Natural killer cell (primary cell): ENCODE measurements at regions of chr11 and their contacts with region 1.

Region 1: GRCh38 chr11:125514336-125515101 is 18.5 kb upstream of the FEZ1 start:
- DNase-seq: peak; percentile 56 to 90
- ATAC-seq: peak; percentile 67 to 87 (median 79)
- H3K4me3 ChIP-seq: no peak overlapping the region
- H3K4me3 Mint-ChIP-seq: peak overlapping the region; percentile 61
- H3K27ac ChIP-seq: peak overlapping the region; percentile 89
- H3K27ac Mint-ChIP-seq: peak overlapping the region; percentile 90 to 99
- H3K4me1 ChIP-seq: peaks cover 50% of the 10 kb centered on the region
- H3K4me1 Mint-ChIP-seq: peaks cover 54 to 55% of the 10 kb centered on the region in 2 donors
- H3K27me3 ChIP-seq: no peaks in the 10 kb centered on the region
- H3K27me3 Mint-ChIP-seq: no peaks in the 10 kb centered on the region
- CTCF ChIP-seq: no peak

Region 2: GRCh38 chr11:125111343-125112207 is 402.9 kb before region 1 on chr11 and contains the start of gene TMEM218:
- intact Hi-C with region 1: loop called (anchors 5 kb)
- DNase-seq: peak; percentile 90 to 98
- ATAC-seq: peak; percentile 92 to 98 (median 95)
- H3K4me3 ChIP-seq: peak within 1 kb of the TSS; percentile 82
- H3K4me3 Mint-ChIP-seq: peak within 1 kb of the TSS; percentile 99
- H3K27ac ChIP-seq: peak within 1 kb of the TSS; percentile 84
- H3K27ac Mint-ChIP-seq: peak within 1 kb of the TSS; percentile 95 to 99
- H3K4me1 ChIP-seq: peaks cover 14% of the 10 kb centered on the region
- H3K4me1 Mint-ChIP-seq: peaks cover 17 to 23% of the 10 kb centered on the region in 2 donors
- H3K27me3 ChIP-seq: no peaks in the 10 kb centered on the region
- H3K27me3 Mint-ChIP-seq: peaks cover 0 to 9% of the 10 kb centered on the region in 2 donors
- CTCF ChIP-seq: no peak
- total RNA-seq, gene TMEM218: 10.0 to 14.2 (median 12.1) TPM

Region 3: DNA sequence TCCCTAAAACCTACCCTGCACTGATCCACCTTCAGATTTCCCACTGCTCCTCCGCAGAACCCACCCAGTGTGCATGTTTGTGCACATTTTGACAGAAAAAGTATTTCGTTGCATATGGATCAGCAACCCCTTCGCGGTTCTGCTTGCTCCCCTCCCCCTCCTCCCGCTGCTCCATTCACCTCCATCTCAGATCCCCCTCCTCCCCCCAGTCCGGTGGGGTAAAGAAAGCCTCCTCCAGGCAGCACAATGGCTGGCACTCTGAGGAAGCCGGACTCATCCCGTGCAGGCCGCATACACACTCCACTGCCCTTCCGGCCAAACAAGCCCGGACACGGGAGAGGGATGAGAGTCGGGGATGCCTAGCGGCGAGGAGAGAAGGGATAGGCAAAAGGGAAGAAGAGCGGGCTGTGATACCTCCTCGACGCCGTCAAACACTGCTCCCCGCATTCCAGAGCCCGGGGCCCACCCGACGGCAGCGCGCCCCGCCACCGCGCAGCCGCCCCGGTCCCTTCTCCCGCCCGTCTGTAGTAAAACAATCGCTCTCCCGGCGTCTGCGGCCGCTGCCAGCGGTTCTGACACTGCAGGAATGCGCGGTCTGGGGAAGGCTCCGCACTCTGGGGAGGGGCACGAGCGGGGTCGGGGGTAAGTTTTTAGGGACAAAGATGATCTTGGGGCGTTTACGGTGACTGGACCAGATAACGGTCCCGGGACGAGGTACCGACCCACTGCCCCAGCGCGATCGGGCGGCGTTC is 19.4 kb before region 1 on chr11:
- intact Hi-C with region 1: loop called (anchors 1 kb)
- DNase-seq: peak; percentile 22 to 43
- ATAC-seq: peak; percentile 11 to 28 (median 25)
- H3K4me3 ChIP-seq: peak overlapping the region; percentile 80
- H3K4me3 Mint-ChIP-seq: peak overlapping the region; percentile 96
- H3K27ac ChIP-seq: no peak overlapping the region
- H3K27ac Mint-ChIP-seq: peak overlapping the region; percentile 90
- H3K4me1 ChIP-seq: peaks cover 24% of the 10 kb centered on the region
- H3K4me1 Mint-ChIP-seq: peaks cover 30 to 40% of the 10 kb centered on the region in 2 donors
- H3K27me3 ChIP-seq: peaks cover 9% of the 10 kb centered on the region
- H3K27me3 Mint-ChIP-seq: peaks cover 0 to 10% of the 10 kb centered on the region in 2 donors
- CTCF ChIP-seq: no peak

Region 4: GRCh38 chr11:125568970-125569914 is 54.7 kb after region 1 on chr11 and contains the start of gene EI24:
- intact Hi-C with region 1: loop called (anchors 5 kb)
- DNase-seq: peak; percentile 77 to 94
- ATAC-seq: peak; percentile 94 to 98 (median 95)
- H3K4me3 ChIP-seq: peak within 1 kb of the TSS; percentile 82
- H3K4me3 Mint-ChIP-seq: peak within 1 kb of the TSS; percentile 89
- H3K27ac ChIP-seq: peak within 1 kb of the TSS; percentile 76
- H3K27ac Mint-ChIP-seq: peak within 1 kb of the TSS; percentile 87 to 95
- H3K4me1 ChIP-seq: peaks cover 19% of the 10 kb centered on the region
- H3K4me1 Mint-ChIP-seq: peaks cover 18 to 21% of the 10 kb centered on the region in 2 donors
- H3K27me3 ChIP-seq: no peaks in the 10 kb centered on the region
- H3K27me3 Mint-ChIP-seq: no peaks in the 10 kb centered on the region
- CTCF ChIP-seq: peak; percentile 55
- total RNA-seq, gene EI24: 19.5 to 30.0 (median 20.2) TPM

Region 5: GRCh38 chr11:125592305-125593112 is 78.0 kb after region 1 on chr11 and contains the start of gene STT3A:
- intact Hi-C with region 1: loop called (anchors 1 kb)
- DNase-seq: peak; percentile 97 to 99
- ATAC-seq: peak; percentile 91 to 98 (median 92)
- H3K4me3 ChIP-seq: peak within 1 kb of the TSS; percentile 81
- H3K4me3 Mint-ChIP-seq: peak within 1 kb of the TSS; percentile 99
- H3K27ac ChIP-seq: peak within 1 kb of the TSS; percentile 97
- H3K27ac Mint-ChIP-seq: peak within 1 kb of the TSS; percentile 99 to 100
- H3K4me1 ChIP-seq: peaks cover 20% of the 10 kb centered on the region
- H3K4me1 Mint-ChIP-seq: peaks cover 41 to 52% of the 10 kb centered on the region in 2 donors
- H3K27me3 ChIP-seq: no peaks in the 10 kb centered on the region
- H3K27me3 Mint-ChIP-seq: no peaks in the 10 kb centered on the region
- CTCF ChIP-seq: no peak
- total RNA-seq, gene STT3A: 56.7 to 63.5 (median 62.6) TPM

Region 6: GRCh38 chr11:125887373-125888324 is 373.1 kb after region 1 on chr11 and contains the start of gene HYLS1:
- intact Hi-C with region 1: loop called (anchors 5 kb)
- DNase-seq: peak; percentile 98
- ATAC-seq: peak; percentile 75 to 91 (median 85)
- H3K4me3 ChIP-seq: peak within 1 kb of the TSS; percentile 90
- H3K4me3 Mint-ChIP-seq: peak within 1 kb of the TSS; percentile 96
- H3K27ac ChIP-seq: peak within 1 kb of the TSS; percentile 95
- H3K27ac Mint-ChIP-seq: peak within 1 kb of the TSS; percentile 94 to 97
- H3K4me1 ChIP-seq: peaks cover 15% of the 10 kb centered on the region
- H3K4me1 Mint-ChIP-seq: peaks cover 17 to 22% of the 10 kb centered on the region in 2 donors
- H3K27me3 ChIP-seq: no peaks in the 10 kb centered on the region
- H3K27me3 Mint-ChIP-seq: peaks cover 0 to 4% of the 10 kb centered on the region in 2 donors
- CTCF ChIP-seq: no peak
- total RNA-seq, gene HYLS1: 4.4 to 6.8 (median 5.6) TPM

Region 7: GRCh38 chr11:126332131-126332711 is 817.7 kb after region 1 on chr11:
- intact Hi-C with region 1: loop called (anchors 5 kb)
- DNase-seq: peak; percentile 65
- ATAC-seq: peak; percentile 69 to 90 (median 80)
- H3K4me3 ChIP-seq: no peak overlapping the region
- H3K4me3 Mint-ChIP-seq: peak overlapping the region; percentile 80
- H3K27ac ChIP-seq: peak overlapping the region; percentile 85
- H3K27ac Mint-ChIP-seq: peak overlapping the region; percentile 88 to 97
- H3K4me1 ChIP-seq: peaks cover 90% of the 10 kb centered on the region
- H3K4me1 Mint-ChIP-seq: peaks cover 84 to 85% of the 10 kb centered on the region in 2 donors
- H3K27me3 ChIP-seq: no peaks in the 10 kb centered on the region
- H3K27me3 Mint-ChIP-seq: no peaks in the 10 kb centered on the region
- CTCF ChIP-seq: no peak